ENCODE measurements at regions of chr9 and their contacts with region 1.

Region 1: DNA sequence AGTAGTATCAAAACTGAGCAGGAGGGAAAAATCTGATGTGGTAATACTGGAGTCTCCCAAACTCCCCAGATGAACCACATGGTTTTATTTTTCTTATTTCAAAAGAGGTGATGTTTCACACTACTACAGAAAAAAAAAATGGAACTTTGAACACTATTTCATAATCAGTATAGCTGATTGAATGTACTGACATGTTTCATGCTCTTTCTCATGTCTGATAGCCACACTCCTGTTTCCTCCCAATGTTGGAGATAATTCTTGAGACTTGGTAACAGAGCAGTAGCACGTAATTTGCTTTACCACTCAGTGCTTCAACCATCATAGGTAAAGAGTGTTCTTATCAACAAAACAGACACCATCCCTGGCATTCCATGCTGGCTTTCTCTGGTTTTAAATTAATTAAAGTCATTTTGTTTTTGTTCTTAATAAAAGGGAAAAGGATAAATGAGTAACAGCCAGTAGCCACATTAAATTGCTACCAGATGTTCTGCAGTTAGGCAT is 85.2 kb downstream of the MUSK start:
- DNase-seq: no peak
- H3K4me3 ChIP-seq: no peak overlapping the region
- H3K27ac ChIP-seq: no peak overlapping the region
- H3K4me1 ChIP-seq: peaks cover 0 to 19% (median 3%) of the 10 kb centered on the region in 4 donors
- H3K27me3 ChIP-seq: no peaks in the 10 kb centered on the region
- CTCF ChIP-seq: no peak

Region 2: DNA sequence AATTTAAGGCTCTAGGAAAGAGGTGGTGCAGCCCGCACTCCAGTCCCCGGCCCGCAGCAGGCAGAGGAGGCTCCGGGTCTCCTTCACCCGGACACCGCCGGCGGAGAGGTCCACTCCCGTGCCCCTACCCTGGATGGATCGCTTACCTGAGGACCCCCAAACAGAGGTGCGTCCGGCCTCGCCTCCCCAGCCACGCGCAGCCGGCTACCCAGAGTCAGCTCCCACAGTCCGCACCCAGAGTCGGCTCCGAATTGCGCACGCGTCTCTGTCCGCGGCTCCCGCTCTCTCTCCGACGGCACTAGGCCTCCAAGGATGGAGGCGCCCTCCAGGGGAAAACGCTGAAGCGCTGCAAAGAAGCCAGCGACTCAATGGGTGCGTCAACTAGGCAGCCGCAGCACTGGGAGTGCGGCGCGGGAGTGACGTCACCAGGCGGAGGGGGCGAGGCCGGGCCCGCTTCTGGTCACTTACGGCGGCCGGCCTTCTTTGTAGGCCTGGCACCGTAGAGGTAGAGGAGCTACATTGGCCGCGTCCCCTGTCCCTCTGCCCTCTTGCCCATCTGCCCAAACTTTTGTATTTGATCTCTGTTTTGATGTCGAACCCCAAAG is 1820.0 kb before region 1 on chr9 and contains the start of gene ELP1:
- intact Hi-C with region 1: no loop called
- DNase-seq: peak; percentile 90 to 94
- H3K4me3 ChIP-seq: peak within 1 kb of the TSS; percentile 71 to 76
- H3K27ac ChIP-seq: peak within 1 kb of the TSS; percentile 83 to 86
- H3K4me1 ChIP-seq: peaks cover 0 to 25% (median 18%) of the 10 kb centered on the region in 4 donors
- H3K27me3 ChIP-seq: no peaks in the 10 kb centered on the region
- CTCF ChIP-seq: no peak

Region 3: GRCh38 chr9:110812886-110813285 is 59.1 kb after region 1 on chr9:
- intact Hi-C with region 1: loop called (anchors 2 kb)
- DNase-seq: no peak
- H3K4me3 ChIP-seq: no peak overlapping the region
- H3K27ac ChIP-seq: no peak overlapping the region
- H3K4me1 ChIP-seq: no peaks in the 10 kb centered on the region
- H3K27me3 ChIP-seq: no peaks in the 10 kb centered on the region
- CTCF ChIP-seq: no peak